Activated CD4-positive, alpha-beta T cell treated with anti-CD3 and anti-CD28 coated beads for 36 hours (primary cell): ENCODE measurements at regions of chr19 and their contacts with region 1.

Region 1: GRCh38 chr19:50724522-50725217 is 1.5 kb downstream of the CLEC11A start:
- DNase-seq: peak; percentile 99
- ATAC-seq: peak; percentile 87
- H3K4me3 Mint-ChIP-seq: peak overlapping the region; percentile 80
- H3K27ac Mint-ChIP-seq: peak overlapping the region; percentile 63
- H3K4me1 Mint-ChIP-seq: peaks cover 26% of the 10 kb centered on the region
- H3K27me3 Mint-ChIP-seq: peaks cover 36% of the 10 kb centered on the region

Region 2: GRCh38 chr19:50383852-50384684 is 340.6 kb before region 1 on chr19 and contains the start of gene POLD1:
- CTCF ChIA-PET with region 1: no interaction called
- POLR2A ChIA-PET with region 1: no interaction called
- intact Hi-C with region 1: loop called in 1 of 2 experiments (anchors 2 kb)
- DNase-seq: peak; percentile 100
- ATAC-seq: peak; percentile 92
- H3K4me3 Mint-ChIP-seq: peak within 1 kb of the TSS; percentile 99
- H3K27ac Mint-ChIP-seq: peak within 1 kb of the TSS; percentile 93
- H3K4me1 Mint-ChIP-seq: peaks cover 27% of the 10 kb centered on the region
- H3K27me3 Mint-ChIP-seq: no peaks in the 10 kb centered on the region
- total RNA-seq, gene POLD1: 220 to 227 TPM

Region 3: DNA sequence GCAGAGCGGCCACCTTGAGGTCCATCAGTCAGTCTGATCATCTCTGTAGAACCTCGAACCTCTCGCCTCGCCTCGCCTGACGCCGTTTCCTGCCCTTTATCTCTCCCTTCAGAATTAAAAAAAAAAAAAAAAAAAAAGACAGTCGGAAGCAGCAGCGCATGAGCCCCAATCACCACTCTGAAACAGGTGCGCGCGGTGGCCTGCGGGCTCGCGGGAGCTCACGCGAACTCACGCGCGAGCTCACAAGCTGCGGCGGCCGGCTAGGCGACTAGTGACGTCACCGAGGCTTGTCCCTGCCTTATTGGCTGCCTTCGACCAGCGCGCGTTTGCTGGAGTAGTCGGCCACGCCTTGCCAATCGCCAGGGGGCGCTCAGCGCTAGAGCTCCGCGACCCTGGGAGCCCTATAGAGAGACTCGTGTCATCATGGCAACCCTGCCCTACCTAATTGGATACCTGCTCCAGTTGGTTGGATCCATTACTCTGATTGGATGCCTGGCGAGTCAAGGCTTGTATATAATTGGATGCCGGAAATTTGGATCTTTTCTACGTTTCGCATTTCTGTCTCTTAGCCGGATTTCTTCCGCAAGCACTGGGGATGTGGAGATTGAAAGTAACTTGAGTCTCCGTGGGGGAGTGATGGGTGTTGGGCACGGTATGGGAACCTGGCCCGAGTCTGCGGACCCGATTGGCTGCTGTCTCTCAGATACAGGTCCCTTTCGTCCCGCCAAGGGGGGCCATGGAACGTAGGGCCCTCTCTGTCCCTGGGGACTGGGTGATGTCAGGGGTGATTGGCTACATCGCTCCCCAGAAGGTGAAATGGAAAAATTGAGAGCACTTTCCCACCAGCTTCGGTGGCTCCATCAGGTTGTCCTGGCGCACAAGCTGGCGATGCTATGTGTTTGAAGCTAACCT is 116.5 kb before region 1 on chr19:
- CTCF ChIA-PET with region 1: interaction called, 3 read pairs
- POLR2A ChIA-PET with region 1: no interaction called
- intact Hi-C with region 1: loop called in 1 of 2 experiments (anchors 1 kb)
- DNase-seq: peak; percentile 95
- ATAC-seq: peak; percentile 93
- H3K4me3 Mint-ChIP-seq: peak overlapping the region; percentile 5
- H3K27ac Mint-ChIP-seq: no peak overlapping the region
- H3K4me1 Mint-ChIP-seq: peaks cover 13% of the 10 kb centered on the region
- H3K27me3 Mint-ChIP-seq: peaks cover 35% of the 10 kb centered on the region

Region 4: DNA sequence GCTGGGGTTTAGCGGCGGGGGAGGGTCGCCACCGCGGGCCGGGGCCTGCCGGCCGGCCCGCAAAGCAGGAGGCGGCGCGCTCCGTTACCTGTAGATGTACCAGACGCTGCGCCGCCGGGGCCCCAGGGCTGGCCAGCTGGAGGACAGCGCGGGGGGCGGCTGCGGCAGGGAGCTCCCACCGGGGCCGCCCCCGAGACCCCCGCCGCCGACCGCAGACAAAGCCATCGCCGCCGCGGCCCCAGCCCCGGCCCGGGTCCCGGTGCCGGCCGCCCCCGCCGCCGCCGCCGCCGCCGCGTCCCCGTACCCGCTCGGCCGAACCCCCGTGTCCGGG is 29.9 kb before region 1 on chr19:
- CTCF ChIA-PET with region 1: no interaction called
- POLR2A ChIA-PET with region 1: no interaction called
- intact Hi-C with region 1: no loop called
- DNase-seq: no peak
- ATAC-seq: no peak
- H3K4me3 Mint-ChIP-seq: no peak overlapping the region
- H3K27ac Mint-ChIP-seq: no peak overlapping the region
- H3K4me1 Mint-ChIP-seq: no peaks in the 10 kb centered on the region
- H3K27me3 Mint-ChIP-seq: peaks cover 52% of the 10 kb centered on the region

Region 5: DNA sequence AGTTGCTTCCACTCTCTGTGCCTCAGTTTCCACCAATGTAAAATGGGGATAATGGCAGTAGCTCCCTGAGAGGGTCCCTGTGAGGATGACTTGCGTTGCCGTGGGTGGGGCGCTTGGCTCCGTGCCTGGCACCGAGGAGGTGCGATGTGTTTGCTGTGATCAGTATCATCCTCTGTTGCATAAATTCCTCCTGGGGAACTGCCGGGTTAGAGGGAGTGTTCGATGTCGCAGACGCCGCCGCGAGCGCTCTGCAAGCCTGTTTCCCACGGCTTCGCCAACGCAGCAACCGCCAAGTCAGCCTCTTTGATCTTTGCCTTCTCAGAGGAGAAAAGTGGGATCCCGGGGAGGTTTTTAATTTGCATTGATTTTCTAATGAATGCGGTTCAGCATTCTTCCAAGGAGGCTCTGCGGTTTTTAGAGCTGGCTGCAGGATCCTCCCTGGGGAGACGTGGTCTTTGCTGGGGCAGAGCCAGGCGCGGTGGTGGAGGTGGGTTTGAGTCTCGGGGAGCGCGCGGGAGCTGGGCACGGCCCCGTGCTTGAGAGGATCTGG is 53.2 kb after region 1 on chr19:
- CTCF ChIA-PET with region 1: interaction called, 10 read pairs
- POLR2A ChIA-PET with region 1: no interaction called
- intact Hi-C with region 1: loop called in 1 of 2 experiments (anchors 1 kb)
- DNase-seq: peak; percentile 49
- ATAC-seq: no peak
- H3K4me3 Mint-ChIP-seq: no peak overlapping the region
- H3K27ac Mint-ChIP-seq: no peak overlapping the region
- H3K4me1 Mint-ChIP-seq: peaks cover 6% of the 10 kb centered on the region
- H3K27me3 Mint-ChIP-seq: peaks cover 59% of the 10 kb centered on the region

Region 6: GRCh38 chr19:51108066-51108804 is 383.6 kb after region 1 on chr19 and contains the start of gene CTU1:
- CTCF ChIA-PET with region 1: no interaction called
- POLR2A ChIA-PET with region 1: no interaction called
- intact Hi-C with region 1: loop called in 1 of 2 experiments (anchors 1 kb)
- DNase-seq: peak; percentile 99
- ATAC-seq: peak; percentile 98
- H3K4me3 Mint-ChIP-seq: peak within 1 kb of the TSS; percentile 92
- H3K27ac Mint-ChIP-seq: peak within 1 kb of the TSS; percentile 91
- H3K4me1 Mint-ChIP-seq: peaks cover 36% of the 10 kb centered on the region
- H3K27me3 Mint-ChIP-seq: no peaks in the 10 kb centered on the region
- total RNA-seq, gene CTU1: 7.2 to 9.1 TPM

Region 7: GRCh38 chr19:51366389-51367254 is 642.0 kb after region 1 on chr19:
- CTCF ChIA-PET with region 1: no interaction called
- POLR2A ChIA-PET with region 1: no interaction called
- intact Hi-C with region 1: no loop called
- DNase-seq: peak; percentile 97
- ATAC-seq: peak; percentile 66
- H3K4me3 Mint-ChIP-seq: peak overlapping the region; percentile 90
- H3K27ac Mint-ChIP-seq: peak overlapping the region; percentile 97
- H3K4me1 Mint-ChIP-seq: peaks cover 57% of the 10 kb centered on the region
- H3K27me3 Mint-ChIP-seq: no peaks in the 10 kb centered on the region